WTC11 (cell line): ENCODE measurements at regions of chr3 and their contacts with region 1.

Region 1: GRCh38 chr3:107690522-107691138 is 167.9 kb downstream of the BBX start:
- DNase-seq: no peak
- ATAC-seq: peak; percentile 47; the same call in 1 of the 2 replicates
- H3K4me3 Mint-ChIP-seq: no peak overlapping the region
- H3K27ac Mint-ChIP-seq: no peak overlapping the region
- H3K4me1 Mint-ChIP-seq: peaks cover 14% of the 10 kb centered on the region
- H3K27me3 Mint-ChIP-seq: no peaks in the 10 kb centered on the region
- CTCF ChIP-seq: peak; percentile 30; the same call in 1 of the 2 replicates

Region 2: GRCh38 chr3:107562969-107563529 is 127.6 kb before region 1 on chr3:
- CTCF ChIA-PET with region 1: no interaction called
- POLR2A ChIA-PET with region 1: no interaction called
- DNase-seq: no peak
- ATAC-seq: peak; percentile 75
- H3K4me3 Mint-ChIP-seq: no peak overlapping the region
- H3K27ac Mint-ChIP-seq: no peak overlapping the region
- H3K4me1 Mint-ChIP-seq: peaks cover 26% of the 10 kb centered on the region
- H3K27me3 Mint-ChIP-seq: no peaks in the 10 kb centered on the region
- CTCF ChIP-seq: no peak

Region 3: GRCh38 chr3:107598926-107599771 is 91.5 kb before region 1 on chr3:
- CTCF ChIA-PET with region 1: no interaction called
- POLR2A ChIA-PET with region 1: no interaction called
- DNase-seq: peak; percentile 47
- ATAC-seq: peak; percentile 93
- H3K4me3 Mint-ChIP-seq: peak overlapping the region; percentile 50
- H3K27ac Mint-ChIP-seq: peak overlapping the region; percentile 86
- H3K4me1 Mint-ChIP-seq: peaks cover 60% of the 10 kb centered on the region
- H3K27me3 Mint-ChIP-seq: no peaks in the 10 kb centered on the region
- CTCF ChIP-seq: no peak

Region 4: GRCh38 chr3:107718547-107718946 is 27.9 kb after region 1 on chr3:
- CTCF ChIA-PET with region 1: interaction called, 12 read pairs
- POLR2A ChIA-PET with region 1: no interaction called
- DNase-seq: no peak
- ATAC-seq: no peak
- H3K4me3 Mint-ChIP-seq: no peak overlapping the region
- H3K27ac Mint-ChIP-seq: no peak overlapping the region; the same call in 1 of the 2 replicates
- H3K4me1 Mint-ChIP-seq: peaks cover 14% of the 10 kb centered on the region
- H3K27me3 Mint-ChIP-seq: no peaks in the 10 kb centered on the region
- CTCF ChIP-seq: no peak

Region 5: GRCh38 chr3:107740992-107741896 is 50.6 kb after region 1 on chr3:
- CTCF ChIA-PET with region 1: interaction called, 20 read pairs
- POLR2A ChIA-PET with region 1: no interaction called
- DNase-seq: no peak
- ATAC-seq: no peak
- H3K4me3 Mint-ChIP-seq: no peak overlapping the region
- H3K27ac Mint-ChIP-seq: no peak overlapping the region
- H3K4me1 Mint-ChIP-seq: peaks cover 12% of the 10 kb centered on the region
- H3K27me3 Mint-ChIP-seq: no peaks in the 10 kb centered on the region
- CTCF ChIP-seq: peak; percentile 30; the same call in 1 of the 2 replicates

Region 6: DNA sequence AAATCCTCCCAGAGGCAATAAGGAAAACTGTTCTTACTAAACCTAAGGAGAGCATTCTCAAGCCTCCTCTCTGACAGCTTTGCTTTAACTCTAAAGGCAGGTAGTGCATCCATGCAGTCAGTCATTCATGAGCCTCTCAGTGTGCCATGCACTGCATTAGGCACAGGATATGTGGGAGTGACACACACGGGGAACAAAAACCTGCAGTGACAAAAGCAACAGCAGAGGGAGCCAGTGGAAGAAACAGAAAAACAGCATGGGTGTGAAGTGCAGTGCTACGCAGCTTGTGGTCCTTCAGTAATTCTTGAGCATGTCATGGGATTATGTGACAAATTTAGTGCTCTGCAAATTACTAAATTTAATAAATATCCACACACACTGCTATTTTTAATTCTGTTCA is 62.9 kb after region 1 on chr3:
- CTCF ChIA-PET with region 1: interaction called, 12 read pairs
- POLR2A ChIA-PET with region 1: no interaction called
- DNase-seq: peak; percentile 44
- ATAC-seq: peak; percentile 92
- H3K4me3 Mint-ChIP-seq: no peak overlapping the region
- H3K27ac Mint-ChIP-seq: no peak overlapping the region
- H3K4me1 Mint-ChIP-seq: peaks cover 5% of the 10 kb centered on the region
- H3K27me3 Mint-ChIP-seq: no peaks in the 10 kb centered on the region
- CTCF ChIP-seq: no peak

Region 7: DNA sequence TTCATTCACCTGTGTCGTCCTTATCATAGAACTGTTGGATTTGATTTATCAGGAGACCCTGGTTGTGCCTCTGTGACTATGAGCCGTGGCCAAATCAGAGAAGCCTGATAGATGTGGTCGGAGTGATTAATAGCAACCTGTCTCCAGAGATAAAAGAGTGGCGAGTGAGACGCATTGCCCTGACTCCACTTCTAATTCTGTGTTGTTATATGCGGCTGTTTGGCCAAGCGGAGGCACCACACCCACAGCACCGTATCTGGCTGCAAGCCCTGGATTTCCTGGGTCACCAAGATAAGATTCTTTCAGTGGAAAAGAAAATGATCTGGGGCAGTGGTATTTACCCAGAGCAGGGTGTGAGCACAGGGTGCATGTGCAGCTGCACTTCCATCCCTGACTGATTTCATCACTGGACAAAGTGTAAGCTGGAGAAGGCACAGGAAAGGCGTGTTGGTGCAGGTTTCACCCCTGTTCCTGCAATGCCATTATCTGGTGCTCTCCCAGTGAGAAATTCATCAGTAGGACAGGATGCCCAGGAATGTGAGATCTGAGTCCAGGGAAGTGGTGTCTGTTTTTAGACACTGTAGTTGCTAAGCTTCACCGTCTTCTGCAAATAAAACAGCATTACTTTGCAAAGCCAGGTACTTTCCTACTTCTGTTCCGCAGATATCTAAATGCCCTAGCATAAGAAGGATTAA is 315.6 kb after region 1 on chr3:
- CTCF ChIA-PET with region 1: no interaction called
- POLR2A ChIA-PET with region 1: no interaction called
- DNase-seq: no peak
- ATAC-seq: no peak
- H3K4me3 Mint-ChIP-seq: no peak overlapping the region
- H3K27ac Mint-ChIP-seq: no peak overlapping the region
- H3K4me1 Mint-ChIP-seq: no peaks in the 10 kb centered on the region
- H3K27me3 Mint-ChIP-seq: no peaks in the 10 kb centered on the region
- CTCF ChIP-seq: no peak